A673 (cell line): ENCODE measurements at regions of chr14 and their contacts with region 1.

Region 1: GRCh38 chr14:38855513-38855912 is 247.5 kb downstream of the SEC23A start:
- DNase-seq: no peak
- H3K4me3 ChIP-seq: no peak overlapping the region
- H3K27ac ChIP-seq: no peak overlapping the region
- H3K4me1 ChIP-seq: no peaks in the 10 kb centered on the region
- H3K27me3 ChIP-seq: no peaks in the 10 kb centered on the region
- CTCF ChIP-seq: no peak

Region 2: DNA sequence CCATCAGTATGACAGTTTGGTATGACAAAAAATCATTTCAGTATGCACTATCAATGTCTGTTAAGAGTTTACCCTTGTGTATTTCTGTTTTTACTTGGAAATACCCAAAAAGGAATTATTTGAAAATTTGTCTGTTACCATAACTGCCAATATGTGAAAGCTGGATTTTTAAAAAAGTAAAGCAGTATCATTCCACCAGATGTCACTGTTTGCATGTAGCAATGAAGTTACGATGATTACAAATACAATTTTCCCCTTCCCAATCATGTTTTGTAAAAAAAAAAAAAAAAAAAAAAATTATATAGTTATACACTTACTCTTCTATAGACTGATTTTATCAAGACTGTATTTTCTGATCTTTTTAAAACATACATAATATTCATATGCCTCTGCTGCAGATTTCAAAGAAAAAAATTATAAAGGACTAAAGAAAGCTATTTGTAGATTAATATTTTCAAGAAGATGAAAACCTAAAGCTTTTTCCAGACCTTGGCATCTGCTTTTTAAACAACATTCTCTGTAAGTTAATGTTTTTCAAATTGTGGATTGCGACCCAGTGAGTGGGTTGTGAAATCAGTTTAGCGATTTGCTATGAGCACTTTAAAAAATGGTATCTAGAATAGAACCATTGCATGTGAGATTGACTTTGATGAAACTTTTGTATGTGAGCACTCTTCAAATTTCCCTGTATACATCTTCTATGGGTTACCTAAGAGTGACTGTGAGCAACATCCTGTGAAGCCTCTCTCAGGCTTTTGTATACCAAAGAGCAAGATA is 1145.9 kb before region 1 on chr14:
- CTCF ChIA-PET with region 1: interaction called, 11 read pairs
- POLR2A ChIA-PET with region 1: no interaction called
- intact Hi-C with region 1: no loop called
- DNase-seq: peak; percentile 12
- H3K4me3 ChIP-seq: no peak overlapping the region
- H3K27ac ChIP-seq: no peak overlapping the region
- H3K4me1 ChIP-seq: no peaks in the 10 kb centered on the region
- H3K27me3 ChIP-seq: no peaks in the 10 kb centered on the region
- CTCF ChIP-seq: peak; percentile 57

Region 3: GRCh38 chr14:38775986-38776385 is 79.5 kb before region 1 on chr14:
- CTCF ChIA-PET with region 1: no interaction called
- POLR2A ChIA-PET with region 1: no interaction called
- intact Hi-C with region 1: no loop called
- DNase-seq: no peak
- H3K4me3 ChIP-seq: no peak overlapping the region
- H3K27ac ChIP-seq: no peak overlapping the region
- H3K4me1 ChIP-seq: no peaks in the 10 kb centered on the region
- H3K27me3 ChIP-seq: no peaks in the 10 kb centered on the region
- CTCF ChIP-seq: no peak

Region 4: GRCh38 chr14:39704594-39704993 is 849.1 kb after region 1 on chr14:
- CTCF ChIA-PET with region 1: no interaction called
- POLR2A ChIA-PET with region 1: no interaction called
- intact Hi-C with region 1: no loop called
- DNase-seq: no peak
- H3K4me3 ChIP-seq: no peak overlapping the region
- H3K27ac ChIP-seq: no peak overlapping the region
- H3K4me1 ChIP-seq: no peaks in the 10 kb centered on the region
- H3K27me3 ChIP-seq: no peaks in the 10 kb centered on the region
- CTCF ChIP-seq: no peak